Ovary (tissue), 10 donors: ENCODE measurements at regions of chr9 and their contacts with region 1.

Region 1: GRCh38 chr9:95447660-95448420 is 68.9 kb downstream of the PTCH1 start:
- DNase-seq: no peak
- H3K4me3 ChIP-seq: no peak overlapping the region
- H3K27ac ChIP-seq: no peak overlapping the region
- H3K4me1 ChIP-seq: no peaks in the 10 kb centered on the region
- H3K27me3 ChIP-seq: no peaks in the 10 kb centered on the region
- CTCF ChIP-seq: no peak
- EP300 ChIP-seq: no peak
- POLR2A ChIP-seq: no peak

Region 2: GRCh38 chr9:95399261-95399660 is 48.6 kb before region 1 on chr9:
- intact Hi-C with region 1: no loop called
- DNase-seq: no peak
- H3K4me3 ChIP-seq: no peak overlapping the region
- H3K27ac ChIP-seq: no peak overlapping the region
- H3K4me1 ChIP-seq: no peaks in the 10 kb centered on the region
- H3K27me3 ChIP-seq: no peaks in the 10 kb centered on the region
- CTCF ChIP-seq: no peak
- EP300 ChIP-seq: no peak
- POLR2A ChIP-seq: no peak

Region 3: DNA sequence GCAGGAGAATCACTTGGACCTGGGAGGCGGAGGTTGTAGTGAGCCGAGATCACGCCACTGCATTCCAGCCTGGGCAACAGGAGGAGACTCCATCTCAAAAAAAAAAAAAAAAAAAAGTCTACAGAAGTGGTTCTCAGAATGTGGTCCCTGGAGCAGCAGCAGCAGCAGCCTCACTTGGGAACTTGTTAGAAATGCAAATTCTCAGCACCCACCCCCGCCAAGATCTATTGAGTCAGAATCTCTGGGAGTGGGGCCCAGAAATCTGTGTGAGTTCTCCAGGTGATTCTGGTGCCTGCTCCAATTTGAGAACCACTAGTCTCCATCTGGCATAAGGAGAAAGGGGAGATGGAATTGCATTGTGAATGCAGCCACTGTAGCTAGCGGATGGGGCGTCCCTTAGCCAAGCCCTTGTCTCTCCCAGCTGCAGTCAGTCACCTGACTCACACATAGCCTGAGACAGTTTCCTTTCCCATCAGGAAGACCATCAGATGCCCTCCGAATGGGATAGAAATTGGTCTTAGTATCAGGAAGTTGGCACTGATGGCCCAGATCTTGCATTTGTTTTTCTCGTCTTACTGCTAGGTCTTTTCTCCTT is 81.2 kb after region 1 on chr9:
- intact Hi-C with region 1: no loop called
- DNase-seq: no peak
- H3K4me3 ChIP-seq: no peak overlapping the region
- H3K27ac ChIP-seq: no peak overlapping the region
- H3K4me1 ChIP-seq: no peaks in the 10 kb centered on the region
- H3K27me3 ChIP-seq: no peaks in the 10 kb centered on the region
- CTCF ChIP-seq: no peak
- EP300 ChIP-seq: no peak
- POLR2A ChIP-seq: no peak

Region 4: DNA sequence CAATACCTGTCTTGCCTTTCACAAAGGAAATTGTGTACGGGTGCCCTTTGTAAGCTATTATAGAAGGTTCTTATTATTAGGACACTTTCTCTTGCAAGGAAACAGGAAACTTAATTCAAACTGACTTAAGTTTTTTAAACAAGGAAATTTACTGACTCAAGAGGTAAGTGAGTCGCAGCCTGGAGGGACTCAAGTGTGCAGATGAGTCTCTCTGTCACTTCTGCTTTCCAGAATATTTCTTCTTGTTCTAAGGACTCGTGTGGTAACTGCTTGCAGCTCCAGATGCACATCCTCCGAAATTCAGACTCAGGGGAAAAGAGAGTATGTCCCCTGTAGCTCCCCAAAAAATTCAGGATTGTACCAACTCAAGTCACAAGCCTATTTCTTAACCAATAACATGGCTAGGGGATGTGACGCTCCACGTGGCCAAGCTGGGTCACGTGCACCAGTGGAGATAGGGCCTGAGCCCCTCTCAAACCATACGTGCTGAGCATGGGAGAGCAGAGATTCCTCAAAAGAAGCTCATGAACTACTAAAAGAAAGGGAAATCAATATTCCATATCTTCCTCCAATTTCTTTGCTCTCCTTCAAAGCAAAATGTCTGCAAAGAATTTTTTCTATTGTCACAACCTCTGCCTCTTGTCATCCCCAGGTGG is 378.5 kb after region 1 on chr9:
- intact Hi-C with region 1: no loop called
- DNase-seq: no peak
- H3K4me3 ChIP-seq: no peak overlapping the region
- H3K27ac ChIP-seq: no peak overlapping the region
- H3K4me1 ChIP-seq: peaks cover 13% of the 10 kb centered on the region
- H3K27me3 ChIP-seq: no peaks in the 10 kb centered on the region
- CTCF ChIP-seq: no peak
- EP300 ChIP-seq: no peak
- POLR2A ChIP-seq: no peak

Region 5: GRCh38 chr9:95907794-95908193 is 460.0 kb after region 1 on chr9:
- intact Hi-C with region 1: no loop called
- DNase-seq: no peak
- H3K4me3 ChIP-seq: no peak overlapping the region
- H3K27ac ChIP-seq: no peak overlapping the region
- H3K4me1 ChIP-seq: no peaks in the 10 kb centered on the region
- H3K27me3 ChIP-seq: no peaks in the 10 kb centered on the region
- CTCF ChIP-seq: no peak
- EP300 ChIP-seq: no peak
- POLR2A ChIP-seq: no peak

Region 6: DNA sequence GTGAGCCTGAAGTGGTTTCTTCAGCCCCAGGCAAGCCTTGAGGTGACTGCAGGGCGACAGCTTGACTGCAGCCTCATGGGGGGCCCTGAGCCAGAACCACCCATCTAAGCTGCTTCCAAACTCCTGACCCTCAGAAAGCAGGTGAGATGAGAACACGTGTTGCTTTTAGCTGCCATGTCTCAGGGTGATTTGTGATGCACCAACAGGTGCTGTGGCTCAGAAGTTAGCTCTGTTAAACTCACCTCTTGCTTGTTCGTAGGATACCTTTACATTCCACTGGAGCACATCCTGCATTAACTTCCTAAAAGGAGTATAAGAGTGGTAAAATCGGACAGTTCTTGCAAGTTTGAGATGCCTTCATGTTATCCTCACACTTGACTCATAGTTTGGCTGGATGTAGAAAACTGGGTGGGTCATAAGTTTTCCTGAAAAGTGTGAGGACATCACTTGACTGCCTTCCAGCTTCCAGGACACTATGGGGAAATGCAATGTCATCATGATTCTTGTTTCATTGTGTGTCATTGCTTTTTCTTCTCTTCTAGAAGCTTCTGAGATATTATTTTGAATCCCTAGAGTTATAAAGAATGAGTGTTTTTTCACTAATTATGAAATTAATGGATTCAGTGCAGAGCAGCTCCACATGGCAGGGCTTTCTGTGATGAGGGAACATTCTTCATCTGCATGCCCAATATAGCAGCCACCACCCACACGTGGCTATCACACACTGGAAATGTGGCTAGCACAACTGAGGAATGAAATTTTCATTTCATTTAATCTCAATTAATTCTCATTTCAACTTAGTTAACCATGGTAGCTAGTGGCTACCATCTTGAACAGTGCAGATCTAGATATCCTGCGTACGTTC is 761.8 kb after region 1 on chr9:
- intact Hi-C with region 1: loop called in 1 of 4 experiments (anchors 5 kb)
- DNase-seq: peak in 1 of 5 donors; percentile 45
- H3K4me3 ChIP-seq: no peak overlapping the region
- H3K27ac ChIP-seq: no peak overlapping the region
- H3K4me1 ChIP-seq: no peaks in the 10 kb centered on the region
- H3K27me3 ChIP-seq: no peaks in the 10 kb centered on the region
- CTCF ChIP-seq: no peak
- EP300 ChIP-seq: no peak
- POLR2A ChIP-seq: no peak